Heart left ventricle (tissue), 16 donors: ENCODE measurements at regions of chr4 and their contacts with region 1.

Region 1: DNA sequence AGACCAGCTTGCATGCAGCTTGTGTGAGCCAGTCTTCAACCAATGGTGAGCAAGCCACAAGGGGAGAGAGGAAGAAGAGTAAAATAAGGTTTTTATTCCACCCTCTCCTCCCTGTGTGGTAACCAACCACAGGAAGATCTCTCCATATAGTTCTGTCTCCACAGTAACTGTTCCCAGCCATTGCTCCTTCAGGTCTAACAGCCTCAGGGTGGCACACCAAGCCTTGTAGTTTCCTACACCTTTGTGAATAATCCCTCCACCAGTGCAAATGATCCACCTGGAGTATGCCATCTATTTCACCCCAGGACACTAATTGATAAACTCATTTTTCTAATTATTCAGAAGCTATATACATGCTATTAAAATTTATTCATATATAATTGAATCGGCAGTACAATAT is 362.6 kb downstream of the ADAM29 start:
- DNase-seq: no peak
- ATAC-seq: no peak
- H3K4me3 ChIP-seq: no peak overlapping the region
- H3K27ac ChIP-seq: no peak overlapping the region
- H3K4me1 ChIP-seq: no peaks in the 10 kb centered on the region
- H3K27me3 ChIP-seq: no peaks in the 10 kb centered on the region
- CTCF ChIP-seq: no peak
- POLR2A ChIP-seq: no peak

Region 2: GRCh38 chr4:174828845-174829701 is 451.7 kb before region 1 on chr4 and contains the start of gene GLRA3:
- intact Hi-C with region 1: no loop called
- DNase-seq: peak in 2 of 5 donors; percentile 24 to 59
- ATAC-seq: peak in 2 of 4 donors; percentile 59 to 68
- H3K4me3 ChIP-seq: peak within 1 kb of the TSS in 3 of 12 donors; percentile 14 to 31 (median 18)
- H3K27ac ChIP-seq: no peak within 1 kb of the TSS
- H3K4me1 ChIP-seq: peaks cover 0 to 3% (median 0%) of the 10 kb centered on the region in 12 donors
- H3K27me3 ChIP-seq: peaks cover 0 to 17% (median 0%) of the 10 kb centered on the region in 9 donors
- CTCF ChIP-seq: no peak
- POLR2A ChIP-seq: no peak
- total RNA-seq, gene GLRA3: 0.02 TPM in 1 of 9 donors, not detected in the others

Region 3: DNA sequence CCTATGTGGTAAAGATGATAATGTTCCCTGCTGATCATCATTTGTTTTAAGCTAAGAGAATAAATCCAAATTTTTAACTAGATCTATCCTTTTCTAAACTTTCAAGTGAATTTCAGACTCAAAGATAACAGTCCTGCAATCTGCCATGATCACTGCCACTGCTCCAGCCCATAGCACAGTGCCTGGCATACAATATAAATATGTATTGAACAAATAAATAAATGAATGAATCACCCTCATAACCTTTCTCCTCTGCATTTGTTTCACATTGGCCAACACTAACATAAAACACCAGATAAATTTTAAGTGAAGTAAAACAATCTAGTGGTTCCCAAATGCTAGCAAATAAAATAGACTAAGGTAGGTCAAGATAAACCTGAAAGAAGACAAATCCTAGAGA is 92.2 kb after region 1 on chr4:
- intact Hi-C with region 1: loop called in 1 of 10 experiments (anchors 10 kb)
- DNase-seq: no peak
- ATAC-seq: no peak
- H3K4me3 ChIP-seq: no peak overlapping the region
- H3K27ac ChIP-seq: no peak overlapping the region
- H3K4me1 ChIP-seq: peaks cover 0 to 5% (median 0%) of the 10 kb centered on the region in 12 donors
- H3K27me3 ChIP-seq: no peaks in the 10 kb centered on the region
- CTCF ChIP-seq: no peak
- POLR2A ChIP-seq: no peak

Region 4: GRCh38 chr4:175394208-175394607 is 113.4 kb after region 1 on chr4:
- intact Hi-C with region 1: no loop called
- DNase-seq: no peak
- ATAC-seq: no peak
- H3K4me3 ChIP-seq: no peak overlapping the region
- H3K27ac ChIP-seq: no peak overlapping the region
- H3K4me1 ChIP-seq: no peaks in the 10 kb centered on the region
- H3K27me3 ChIP-seq: no peaks in the 10 kb centered on the region
- CTCF ChIP-seq: no peak
- POLR2A ChIP-seq: no peak